ENCODE measurements at regions of chr3 and their contacts with region 1.

Region 1: GRCh38 chr3:14222900-14223594 is 44.4 kb downstream of the LSM3 start:
- DNase-seq: no peak
- H3K4me3 ChIP-seq: no peak overlapping the region
- H3K27me3 ChIP-seq: no peaks in the 10 kb centered on the region
- CTCF ChIP-seq: peak; percentile 18; the same call in 1 of the 2 replicates

Region 2: DNA sequence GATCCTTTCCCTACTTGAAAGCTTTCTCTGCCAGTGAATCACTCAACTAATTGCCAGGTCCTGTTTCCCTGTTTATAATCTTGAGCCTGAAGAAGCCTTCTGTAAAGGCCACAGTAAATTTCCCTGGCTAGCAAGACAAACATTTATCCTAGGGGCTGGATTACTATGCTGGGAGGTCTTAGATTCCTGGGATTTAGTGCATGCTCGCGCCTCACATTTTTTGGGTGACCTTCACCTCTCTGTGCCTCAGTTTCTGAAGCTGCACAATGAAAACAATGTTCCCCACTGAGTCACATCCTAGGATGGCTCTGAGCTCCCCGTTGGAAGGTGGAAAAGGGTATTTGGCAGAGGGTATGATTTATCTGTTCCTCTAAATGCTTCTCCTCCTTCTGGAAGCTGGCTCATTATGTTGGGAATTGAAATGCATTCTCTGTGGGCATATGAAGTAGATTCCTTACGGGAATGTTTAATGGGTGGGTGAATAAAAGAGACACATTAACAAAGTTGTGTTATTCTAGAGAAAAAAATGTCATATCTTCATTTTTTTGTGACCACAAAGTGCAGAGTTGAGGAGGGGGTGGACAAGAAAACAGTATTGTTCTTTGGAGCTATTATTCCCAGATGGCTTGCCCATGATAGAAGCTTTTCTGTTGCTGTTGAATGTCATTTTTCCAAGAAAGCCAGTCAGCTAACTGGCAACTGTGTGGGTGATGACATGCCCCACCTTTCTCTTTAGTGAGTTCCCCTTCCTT is 12.0 kb before region 1 on chr3:
- CTCF ChIA-PET with region 1: interaction called, 16 read pairs
- POLR2A ChIA-PET with region 1: no interaction called
- DNase-seq: peak; percentile 99
- H3K4me3 ChIP-seq: no peak overlapping the region
- H3K27me3 ChIP-seq: no peaks in the 10 kb centered on the region
- CTCF ChIP-seq: no peak

Measured in BJ (cell line).